ENCODE measurements at regions of chr5 and their contacts with region 1.

Region 1: GRCh38 chr5:54243473-54244080 is 66.8 kb downstream of the ARL15 start:
- DNase-seq: no peak
- ATAC-seq: no peak
- H3K4me3 Mint-ChIP-seq: no peak overlapping the region
- H3K27ac Mint-ChIP-seq: no peak overlapping the region
- H3K4me1 Mint-ChIP-seq: no peaks in the 10 kb centered on the region
- H3K27me3 Mint-ChIP-seq: peaks cover 2% of the 10 kb centered on the region

Region 2: GRCh38 chr5:54062958-54063357 is 180.6 kb before region 1 on chr5:
- CTCF ChIA-PET with region 1: no interaction called
- DNase-seq: no peak
- ATAC-seq: no peak
- H3K4me3 Mint-ChIP-seq: no peak overlapping the region
- H3K27ac Mint-ChIP-seq: no peak overlapping the region
- H3K4me1 Mint-ChIP-seq: no peaks in the 10 kb centered on the region
- H3K27me3 Mint-ChIP-seq: no peaks in the 10 kb centered on the region

Region 3: GRCh38 chr5:54415896-54416601 is 172.5 kb after region 1 on chr5:
- CTCF ChIA-PET with region 1: interaction called, 20 read pairs
- DNase-seq: no peak
- ATAC-seq: no peak
- H3K4me3 Mint-ChIP-seq: no peak overlapping the region
- H3K27ac Mint-ChIP-seq: no peak overlapping the region
- H3K4me1 Mint-ChIP-seq: no peaks in the 10 kb centered on the region
- H3K27me3 Mint-ChIP-seq: peaks cover 22% of the 10 kb centered on the region

Region 4: DNA sequence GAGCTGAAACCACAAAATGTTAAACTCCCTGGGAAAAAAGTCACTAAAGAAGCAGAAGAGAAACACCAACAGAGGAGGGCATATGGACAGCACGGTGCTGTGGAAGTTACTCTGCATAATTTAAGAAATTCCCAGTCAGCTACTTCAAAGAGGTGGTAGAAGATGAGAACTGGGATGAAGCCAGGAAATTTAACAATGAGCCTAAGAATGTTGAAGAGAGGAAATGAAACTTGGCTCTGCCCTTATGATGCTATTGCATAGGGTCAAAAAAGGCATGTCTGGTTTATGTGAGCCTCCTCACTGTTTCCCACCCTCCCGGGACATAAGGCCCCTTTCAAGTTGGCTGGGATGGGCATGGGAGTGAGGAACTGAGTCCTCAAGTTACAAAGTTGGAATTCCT is 248.6 kb after region 1 on chr5:
- CTCF ChIA-PET with region 1: interaction called, 23 read pairs
- DNase-seq: no peak
- ATAC-seq: no peak
- H3K4me3 Mint-ChIP-seq: no peak overlapping the region
- H3K27ac Mint-ChIP-seq: no peak overlapping the region
- H3K4me1 Mint-ChIP-seq: no peaks in the 10 kb centered on the region
- H3K27me3 Mint-ChIP-seq: peaks cover 16% of the 10 kb centered on the region

Measured in activated CD8-positive, alpha-beta memory T cell treated with anti-CD3 and anti-CD28 coated beads, Interleukin-2, amount 10 ng/mL, durations not matched to agents 7 days and 5 days (primary cell).